Stomach (tissue), 19 donors: ENCODE measurements at regions of chr17 and their contacts with region 1.

Region 1: GRCh38 chr17:35312790-35313711 is 60.4 kb downstream of the SLFN11 start:
- DNase-seq: peak; percentile 37 to 91
- H3K4me3 ChIP-seq: peak overlapping the region; percentile 23 to 41 (median 30)
- H3K27ac ChIP-seq: peak overlapping the region; percentile 20 to 67 (median 53)
- H3K4me1 ChIP-seq: peaks cover 4 to 37% (median 22%) of the 10 kb centered on the region in 4 donors
- H3K27me3 ChIP-seq: peaks cover 0 to 14% (median 0%) of the 10 kb centered on the region in 3 donors
- CTCF ChIP-seq: peak in 5 of 7 experiments; percentile 33 to 72 (median 68)
- EP300 ChIP-seq: no peak
- POLR2A ChIP-seq: no peak

Region 2: DNA sequence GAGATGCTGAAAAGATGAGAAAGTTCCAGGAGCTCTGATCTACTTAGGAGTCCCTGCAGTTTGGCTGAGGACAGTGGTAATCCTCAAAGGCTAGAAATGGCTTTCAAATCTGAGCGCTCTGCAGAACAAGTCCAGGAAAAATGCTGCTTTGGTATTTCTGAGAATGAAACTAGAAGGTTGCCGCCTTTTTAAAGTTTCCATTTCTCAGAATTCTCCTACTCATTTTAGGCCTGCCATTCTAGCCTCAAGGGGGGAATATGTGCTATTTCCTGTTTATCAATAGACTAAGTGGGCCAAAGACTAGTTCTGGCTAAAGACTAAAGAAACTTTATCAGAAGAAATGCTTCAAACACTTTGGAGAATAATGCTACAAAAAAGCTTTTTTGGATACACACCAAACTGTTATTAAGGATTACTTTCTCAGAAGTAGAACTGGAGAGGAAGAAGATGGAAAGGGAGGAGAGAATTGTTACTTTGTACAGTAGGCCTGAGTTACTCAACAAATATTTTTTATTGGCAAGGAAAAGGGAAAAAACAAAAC is 224.6 kb after region 1 on chr17 and contains the start of gene SLFN12L:
- intact Hi-C with region 1: loop called (anchors 5 kb)
- DNase-seq: peak in 1 of 2 donors; percentile 76
- H3K4me3 ChIP-seq: peak within 1 kb of the TSS in 2 of 4 donors; percentile 18 to 19
- H3K27ac ChIP-seq: peak within 1 kb of the TSS in 4 of 5 donors; percentile 27 to 84 (median 70)
- H3K4me1 ChIP-seq: peaks cover 16 to 43% (median 30%) of the 10 kb centered on the region in 4 donors
- H3K27me3 ChIP-seq: no peaks in the 10 kb centered on the region
- CTCF ChIP-seq: no peak
- EP300 ChIP-seq: no peak
- POLR2A ChIP-seq: no peak
- total RNA-seq, gene SLFN12L: 0.58 to 7.0 (median 1.8) TPM